Pancreas (tissue), 10 donors: ENCODE measurements at regions of chr11 and their contacts with region 1.

Region 1: GRCh38 chr11:69645295-69645694 is 4.3 kb downstream of the CCND1 start:
- DNase-seq: peak in 2 of 6 donors; percentile 48 to 63
- ATAC-seq: no peak
- H3K4me3 ChIP-seq: peak overlapping the region in 2 of 4 donors; percentile 69 to 84
- H3K27ac ChIP-seq: peak overlapping the region in 2 of 4 donors; percentile 9 to 16
- H3K4me1 ChIP-seq: peaks cover 0 to 18% (median 10%) of the 10 kb centered on the region in 3 donors
- H3K27me3 ChIP-seq: peaks cover 0 to 4% (median 0%) of the 10 kb centered on the region in 4 donors
- CTCF ChIP-seq: no peak

Region 2: GRCh38 chr11:69101115-69101791 is 544.0 kb before region 1 on chr11:
- intact Hi-C with region 1: loop called (anchors 5 to 10 kb)
- DNase-seq: peak; percentile 78 to 94 (median 90)
- ATAC-seq: peak; percentile 88 to 98 (median 95)
- H3K4me3 ChIP-seq: no peak overlapping the region
- H3K27ac ChIP-seq: no peak overlapping the region
- H3K4me1 ChIP-seq: no peaks in the 10 kb centered on the region
- H3K27me3 ChIP-seq: no peaks in the 10 kb centered on the region
- CTCF ChIP-seq: peak; percentile 99

Region 3: DNA sequence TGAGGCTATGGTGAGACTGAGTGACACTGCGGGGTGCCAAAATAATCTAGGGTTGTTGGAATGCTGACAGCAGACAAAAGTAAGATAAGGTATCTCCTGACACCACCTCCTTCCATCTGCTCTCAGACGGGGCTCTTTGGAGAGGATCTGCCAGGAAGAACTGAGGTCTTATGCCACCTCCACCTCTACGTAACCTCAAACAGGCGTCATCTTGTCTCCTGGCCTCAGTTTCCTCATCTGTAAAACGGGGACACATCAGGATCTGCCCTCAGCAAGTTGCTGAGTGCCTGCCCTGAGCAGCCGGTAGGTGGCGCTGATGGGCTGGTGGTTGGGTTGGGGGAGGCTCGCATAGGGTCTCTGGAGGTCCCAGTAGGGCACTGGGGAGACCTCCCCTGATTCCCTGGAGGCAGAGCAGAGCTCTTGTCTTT is 353.1 kb before region 1 on chr11:
- intact Hi-C with region 1: loop called in 1 of 3 experiments (anchors 5 kb)
- DNase-seq: peak in 3 of 6 donors; percentile 43 to 78 (median 44)
- ATAC-seq: peak in 1 of 4 donors; percentile 10
- H3K4me3 ChIP-seq: no peak overlapping the region
- H3K27ac ChIP-seq: no peak overlapping the region
- H3K4me1 ChIP-seq: peaks cover 0 to 8% (median under 1%) of the 10 kb centered on the region in 3 donors
- H3K27me3 ChIP-seq: no peaks in the 10 kb centered on the region
- CTCF ChIP-seq: peak; percentile 43 to 66 (median 56)